Activated T-helper 1 cell treated with anti-CD3 and anti-CD28 coated beads, Interleukin-12 subunit alpha, Interleukin-12 subunit beta, Interleukin-2, Interleukin-4 antibody, amounts not matched to agents 30 ng/mL and 10 ng/mL and 1 ng/mL, durations not matched to agents 14 hours and 24 hours and 36 hours (primary cell): ENCODE measurements at regions of chr1 and their contacts with region 1.

Region 1: GRCh38 chr1:58783993-58784757 is at the start of gene JUN:
- DNase-seq: peak; percentile 98
- H3K4me3 Mint-ChIP-seq: peak within 1 kb of the TSS; percentile 96
- H3K27ac Mint-ChIP-seq: peak within 1 kb of the TSS; percentile 96
- H3K4me1 Mint-ChIP-seq: peaks cover 34% of the 10 kb centered on the region
- H3K27me3 Mint-ChIP-seq: peaks cover 4% of the 10 kb centered on the region
- total RNA-seq, gene JUN: 68.5 and 71.6 TPM in 2 replicates

Region 2: DNA sequence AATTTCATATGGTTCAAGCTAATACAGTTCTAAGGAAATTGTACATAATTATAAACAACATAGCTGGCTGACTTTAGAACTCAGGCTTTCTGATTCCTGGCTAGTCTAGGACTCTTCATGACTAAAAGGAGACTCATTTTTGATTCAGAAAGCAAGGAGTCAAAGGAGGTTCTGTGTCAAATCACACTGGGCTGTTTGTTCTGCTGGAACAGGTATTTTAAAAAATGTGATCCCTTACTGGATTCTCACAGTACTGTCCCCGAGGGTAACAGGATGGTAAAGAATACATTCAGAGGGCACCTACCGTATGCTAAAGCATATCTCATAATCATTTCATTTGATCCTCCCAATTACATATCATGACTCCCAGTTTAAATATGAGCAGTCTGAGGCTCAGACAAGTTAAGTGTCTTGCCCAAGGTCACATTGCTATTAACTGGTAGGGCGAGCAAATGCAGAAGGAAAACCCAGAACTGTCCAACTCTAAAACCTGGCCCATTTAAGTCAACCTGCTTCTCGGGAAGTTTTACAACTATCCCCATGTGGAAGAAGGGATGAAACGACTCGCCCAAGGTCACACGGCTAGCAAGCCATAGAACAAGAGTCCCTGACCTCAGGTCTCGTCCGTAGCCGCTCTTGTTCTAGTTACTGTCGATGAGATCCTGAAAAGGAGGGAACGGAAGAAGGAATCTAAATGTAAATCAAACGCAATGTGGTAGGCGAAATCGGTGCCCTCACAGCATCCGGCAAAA is 85.0 kb before region 1 on chr1:
- intact Hi-C with region 1: loop called (anchors 1 kb)
- DNase-seq: no peak
- H3K4me3 Mint-ChIP-seq: peak overlapping the region; percentile 99
- H3K27ac Mint-ChIP-seq: peak overlapping the region; percentile 98
- H3K4me1 Mint-ChIP-seq: peaks cover 9% of the 10 kb centered on the region
- H3K27me3 Mint-ChIP-seq: no peaks in the 10 kb centered on the region

Region 3: DNA sequence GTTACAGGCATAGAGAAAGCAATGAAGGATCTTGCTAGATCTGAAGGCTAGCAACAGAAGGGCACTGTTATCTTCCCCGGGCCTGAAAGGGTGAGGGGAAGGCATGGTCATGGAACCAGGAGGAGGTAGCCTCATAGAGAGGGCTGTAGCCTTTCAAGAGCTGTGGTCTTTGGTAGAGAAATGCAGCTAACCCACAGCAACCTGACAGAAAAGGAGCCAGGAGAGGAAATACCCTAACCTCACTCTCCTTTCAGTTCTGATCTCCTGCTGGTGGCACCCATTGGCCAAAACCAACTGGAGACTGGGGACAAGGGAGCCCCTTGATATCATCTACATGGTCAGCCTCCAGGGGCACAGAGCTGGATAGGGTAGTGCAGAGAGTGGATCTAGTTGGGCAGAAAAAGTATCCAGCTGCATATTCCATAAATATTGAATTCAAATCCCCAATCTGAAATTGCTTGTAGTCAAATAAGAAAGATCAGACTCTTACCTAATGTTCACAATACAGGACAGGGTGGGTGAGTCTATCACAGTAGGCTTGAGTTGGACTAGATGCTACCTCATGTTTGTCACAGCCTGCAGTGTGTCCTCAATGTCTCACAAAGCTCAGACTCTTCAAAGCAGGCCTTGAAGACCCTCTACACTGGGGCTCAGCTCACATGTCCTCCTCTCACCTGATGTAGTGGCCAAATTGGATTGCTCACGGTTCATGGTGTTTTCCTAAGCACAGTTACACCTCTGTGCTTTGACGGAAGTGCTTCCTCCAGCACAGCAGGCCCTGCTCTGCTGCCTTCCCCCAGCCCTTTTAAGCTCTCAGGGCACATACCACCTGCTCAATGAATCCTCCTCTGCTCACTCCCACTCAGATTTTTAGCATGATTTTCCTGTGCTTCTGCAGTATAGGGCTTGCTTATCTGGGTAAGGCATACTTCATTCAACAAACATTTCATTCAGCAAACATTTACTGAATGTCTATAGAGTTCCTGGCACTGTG is 73.8 kb after region 1 on chr1:
- intact Hi-C with region 1: loop called (anchors 2 kb)
- DNase-seq: peak; percentile 43
- H3K4me3 Mint-ChIP-seq: peak overlapping the region; percentile 61
- H3K27ac Mint-ChIP-seq: peak overlapping the region; percentile 95
- H3K4me1 Mint-ChIP-seq: peaks cover 74% of the 10 kb centered on the region
- H3K27me3 Mint-ChIP-seq: no peaks in the 10 kb centered on the region

Region 4: DNA sequence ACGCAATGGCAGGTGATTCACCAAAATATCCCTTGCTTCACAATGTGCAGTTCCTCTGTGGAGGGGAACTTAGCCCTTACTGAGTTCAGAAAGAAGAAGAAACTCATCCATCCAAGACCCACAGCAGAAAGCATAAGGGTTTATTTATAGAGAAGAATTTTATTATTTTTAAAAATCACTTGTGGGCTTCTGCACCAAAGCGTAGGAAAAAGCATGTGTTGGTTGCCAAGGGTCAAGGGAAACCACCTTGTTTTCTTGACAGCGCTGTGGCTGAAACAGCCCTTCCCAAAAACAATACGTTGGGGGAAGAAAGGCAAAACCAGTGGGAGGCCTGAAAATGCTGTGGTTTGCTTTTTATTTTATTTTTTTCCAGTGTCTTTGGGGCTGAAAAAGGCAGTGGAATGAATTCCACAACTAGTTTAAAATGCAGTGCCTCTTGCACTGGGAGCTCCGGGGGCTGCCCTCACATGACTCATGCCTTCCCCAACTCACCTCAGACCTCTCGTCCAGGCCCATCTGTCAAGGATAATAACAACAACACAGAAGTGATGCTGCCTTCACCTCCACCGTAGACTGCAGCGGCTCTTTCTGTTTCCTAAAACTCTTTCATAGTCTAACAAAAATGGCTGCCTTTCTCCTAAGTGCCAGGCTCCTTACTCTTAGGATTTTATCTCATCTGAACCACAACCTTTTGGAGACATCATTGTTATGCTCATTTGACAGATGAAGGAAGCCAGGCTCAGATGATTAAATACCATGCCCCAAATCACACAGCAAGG is 223.8 kb after region 1 on chr1:
- intact Hi-C with region 1: loop called (anchors 1 kb)
- DNase-seq: peak; percentile 7
- H3K4me3 Mint-ChIP-seq: peak overlapping the region; percentile 52
- H3K27ac Mint-ChIP-seq: peak overlapping the region; percentile 94
- H3K4me1 Mint-ChIP-seq: peaks cover 90% of the 10 kb centered on the region
- H3K27me3 Mint-ChIP-seq: no peaks in the 10 kb centered on the region

Region 5: DNA sequence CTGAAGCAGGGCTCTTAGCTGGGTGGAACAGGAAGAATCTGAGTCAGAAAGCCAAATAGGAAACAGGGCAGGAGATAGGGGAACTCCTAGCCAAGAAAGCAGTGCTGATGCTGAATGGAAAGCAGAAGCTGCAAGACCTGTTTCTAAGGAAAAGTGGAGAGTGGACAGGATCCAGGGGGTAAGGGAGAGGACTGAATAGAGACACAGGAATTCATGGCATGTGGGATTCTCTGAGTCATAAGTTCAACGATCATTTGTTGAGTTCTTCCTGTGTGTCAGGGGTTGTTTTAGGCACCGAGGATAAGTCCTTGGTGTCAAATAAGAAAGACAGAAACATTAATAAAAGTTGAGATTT is 358.9 kb after region 1 on chr1:
- intact Hi-C with region 1: loop called (anchors 2 kb)
- DNase-seq: no peak
- H3K4me3 Mint-ChIP-seq: peak overlapping the region; percentile 8
- H3K27ac Mint-ChIP-seq: peak overlapping the region; percentile 62
- H3K4me1 Mint-ChIP-seq: peaks cover 86% of the 10 kb centered on the region
- H3K27me3 Mint-ChIP-seq: no peaks in the 10 kb centered on the region

Region 6: GRCh38 chr1:59477286-59477685 is 693.1 kb after region 1 on chr1:
- intact Hi-C with region 1: loop called (anchors 1 kb)
- DNase-seq: peak; percentile 30
- H3K4me3 Mint-ChIP-seq: peak overlapping the region; percentile 15
- H3K27ac Mint-ChIP-seq: peak overlapping the region; percentile 84
- H3K4me1 Mint-ChIP-seq: peaks cover 9% of the 10 kb centered on the region
- H3K27me3 Mint-ChIP-seq: no peaks in the 10 kb centered on the region